ENCODE measurements at regions of chr15 and their contacts with region 1.

Region 1: DNA sequence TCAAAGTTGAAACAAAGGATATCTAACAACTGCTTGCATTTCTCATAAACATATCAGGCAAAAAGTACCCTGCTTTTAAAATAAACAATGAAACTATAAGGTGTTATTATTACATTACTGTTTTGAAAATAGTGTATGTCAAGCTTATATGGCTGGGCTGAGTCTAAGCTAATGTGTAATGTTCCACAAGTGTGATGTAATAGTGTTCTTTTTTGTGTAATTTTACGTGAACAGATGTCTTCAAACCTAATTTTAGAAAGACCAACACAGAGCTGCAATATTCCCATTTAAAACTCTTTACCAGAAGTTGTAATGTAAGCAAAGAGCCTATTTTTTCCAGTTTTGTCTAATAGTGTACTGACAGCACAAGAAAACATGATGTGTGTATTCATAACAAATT is 34.0 kb downstream of the MINDY2 start:
- DNase-seq: no peak
- H3K4me3 ChIP-seq: no peak overlapping the region
- H3K27ac ChIP-seq: no peak overlapping the region
- H3K4me1 ChIP-seq: no peaks in the 10 kb centered on the region
- H3K27me3 ChIP-seq: no peaks in the 10 kb centered on the region
- CTCF ChIP-seq: no peak
- EP300 ChIP-seq: no peak
- POLR2A ChIP-seq: no peak

Region 2: DNA sequence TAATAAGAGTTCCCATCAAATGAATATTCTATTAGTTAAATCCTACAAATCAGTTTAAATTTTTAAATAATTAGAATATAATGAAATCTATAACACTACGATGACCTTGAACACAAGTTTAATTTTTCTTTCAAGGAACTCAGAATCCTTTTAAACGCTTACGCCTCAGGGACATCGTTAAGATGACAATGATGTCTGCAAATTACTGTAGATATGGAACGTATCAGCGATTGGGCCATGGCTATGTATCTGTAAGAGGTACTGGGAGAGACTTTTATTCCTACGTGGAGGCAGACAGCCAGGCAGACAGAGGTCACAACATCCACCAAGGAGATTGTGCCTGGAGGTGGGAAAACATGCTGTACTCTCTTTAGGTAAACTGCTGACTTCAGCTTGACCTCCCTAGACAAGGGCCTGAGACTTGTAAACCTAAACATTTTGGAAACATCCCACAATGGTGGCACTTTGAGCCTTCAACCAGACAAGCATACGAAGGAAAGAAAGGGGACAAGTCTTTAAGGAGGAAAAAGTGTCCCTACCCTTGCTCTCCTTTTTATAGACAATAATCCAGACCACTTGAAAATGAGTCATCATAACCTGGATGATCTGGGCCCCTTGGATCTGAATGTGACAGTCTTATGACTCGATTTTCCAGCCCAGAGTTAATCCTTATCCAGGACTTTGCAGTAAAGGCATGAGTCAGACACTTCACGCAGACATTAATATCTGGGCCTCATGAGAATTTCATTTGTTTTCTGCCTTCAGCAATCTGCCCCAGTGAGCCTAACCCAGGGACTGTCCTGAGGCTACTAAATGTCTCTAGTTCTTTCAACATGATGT is 394.8 kb after region 1 on chr15:
- in situ Hi-C with region 1: loop called in 1 of 4 experiments (anchors 25 kb)
- intact Hi-C with region 1: no loop called
- DNase-seq: no peak
- H3K4me3 ChIP-seq: no peak overlapping the region
- H3K27ac ChIP-seq: no peak overlapping the region
- H3K4me1 ChIP-seq: no peaks in the 10 kb centered on the region
- H3K27me3 ChIP-seq: no peaks in the 10 kb centered on the region
- CTCF ChIP-seq: no peak
- EP300 ChIP-seq: no peak
- POLR2A ChIP-seq: no peak